T-cell (primary cell): ENCODE measurements at regions of chr3 and their contacts with region 1.

Region 1: DNA sequence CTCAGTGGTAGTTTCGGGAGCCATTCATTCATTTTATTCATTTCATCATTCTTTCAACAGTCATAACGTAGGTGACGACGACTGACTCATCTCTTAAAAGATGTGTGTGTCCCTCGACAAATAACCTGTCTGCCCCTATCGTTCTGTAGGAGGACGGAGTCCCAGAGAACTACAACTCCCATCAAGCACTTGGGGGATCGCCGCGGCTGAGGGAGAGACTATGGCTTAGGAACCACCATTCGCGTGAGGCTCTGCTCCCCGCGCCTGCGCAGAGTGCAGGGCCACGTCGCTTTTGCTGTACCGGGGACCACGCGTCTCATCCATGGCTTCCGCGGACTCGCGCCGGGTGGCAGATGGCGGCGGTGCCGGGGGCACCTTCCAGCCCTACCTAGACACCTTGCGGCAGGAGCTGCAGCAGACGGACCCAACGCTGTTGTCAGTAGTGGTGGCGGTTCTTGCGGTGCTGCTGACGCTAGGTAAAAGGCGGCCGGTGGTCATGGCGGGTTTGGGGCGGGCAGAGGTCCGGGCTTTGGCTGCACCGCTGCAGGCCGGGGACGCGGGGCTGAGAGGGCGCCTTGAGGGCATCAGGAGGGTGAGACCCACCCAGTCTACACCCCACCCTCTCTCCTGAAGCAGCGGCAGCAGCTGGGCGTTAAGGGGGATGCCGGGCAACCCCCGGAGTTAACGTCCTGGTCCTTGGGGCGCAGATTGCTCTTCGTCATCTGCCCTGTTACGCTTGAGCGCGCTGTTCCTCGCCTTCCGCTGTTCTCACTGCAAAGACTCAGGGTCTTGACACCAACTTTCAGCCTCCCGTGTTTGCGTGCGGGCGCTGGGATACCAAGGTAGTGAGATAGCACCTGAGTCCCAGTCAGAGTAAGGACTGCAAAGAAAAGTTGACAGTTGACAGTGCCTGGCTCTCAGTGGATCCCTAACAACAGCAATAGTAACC is at the start of gene SRPRB:
- DNase-seq: peak; percentile 84 to 97 (median 95)
- ATAC-seq: peak; percentile 97 to 99 (median 98)
- H3K4me3 ChIP-seq: peak within 1 kb of the TSS; percentile 70 to 94
- H3K4me3 Mint-ChIP-seq: peak within 1 kb of the TSS; percentile 95 to 99 (median 97)
- H3K27ac ChIP-seq: peak within 1 kb of the TSS; percentile 74
- H3K27ac Mint-ChIP-seq: peak within 1 kb of the TSS; percentile 86 to 93
- H3K4me1 ChIP-seq: peaks cover 3 to 14% of the 10 kb centered on the region in 2 experiments
- H3K4me1 Mint-ChIP-seq: peaks cover 22 to 43% (median 41%) of the 10 kb centered on the region in 3 donors
- H3K27me3 ChIP-seq: no peaks in the 10 kb centered on the region
- H3K27me3 Mint-ChIP-seq: no peaks in the 10 kb centered on the region
- total RNA-seq, gene SRPRB: 26.9 to 50.3 (median 45.6) TPM

Region 2: GRCh38 chr3:132879636-132880035 is 926.2 kb before region 1 on chr3:
- CTCF ChIA-PET with region 1: no interaction called
- POLR2A ChIA-PET with region 1: no interaction called
- DNase-seq: no peak
- ATAC-seq: no peak
- H3K4me3 ChIP-seq: no peak overlapping the region
- H3K4me3 Mint-ChIP-seq: no peak overlapping the region
- H3K27ac ChIP-seq: no peak overlapping the region
- H3K27ac Mint-ChIP-seq: no peak overlapping the region
- H3K4me1 ChIP-seq: no peaks in the 10 kb centered on the region
- H3K4me1 Mint-ChIP-seq: no peaks in the 10 kb centered on the region
- H3K27me3 ChIP-seq: peaks cover 0 to 2% of the 10 kb centered on the region in 2 experiments
- H3K27me3 Mint-ChIP-seq: peaks cover 7 to 22% of the 10 kb centered on the region in 2 donors

Region 3: DNA sequence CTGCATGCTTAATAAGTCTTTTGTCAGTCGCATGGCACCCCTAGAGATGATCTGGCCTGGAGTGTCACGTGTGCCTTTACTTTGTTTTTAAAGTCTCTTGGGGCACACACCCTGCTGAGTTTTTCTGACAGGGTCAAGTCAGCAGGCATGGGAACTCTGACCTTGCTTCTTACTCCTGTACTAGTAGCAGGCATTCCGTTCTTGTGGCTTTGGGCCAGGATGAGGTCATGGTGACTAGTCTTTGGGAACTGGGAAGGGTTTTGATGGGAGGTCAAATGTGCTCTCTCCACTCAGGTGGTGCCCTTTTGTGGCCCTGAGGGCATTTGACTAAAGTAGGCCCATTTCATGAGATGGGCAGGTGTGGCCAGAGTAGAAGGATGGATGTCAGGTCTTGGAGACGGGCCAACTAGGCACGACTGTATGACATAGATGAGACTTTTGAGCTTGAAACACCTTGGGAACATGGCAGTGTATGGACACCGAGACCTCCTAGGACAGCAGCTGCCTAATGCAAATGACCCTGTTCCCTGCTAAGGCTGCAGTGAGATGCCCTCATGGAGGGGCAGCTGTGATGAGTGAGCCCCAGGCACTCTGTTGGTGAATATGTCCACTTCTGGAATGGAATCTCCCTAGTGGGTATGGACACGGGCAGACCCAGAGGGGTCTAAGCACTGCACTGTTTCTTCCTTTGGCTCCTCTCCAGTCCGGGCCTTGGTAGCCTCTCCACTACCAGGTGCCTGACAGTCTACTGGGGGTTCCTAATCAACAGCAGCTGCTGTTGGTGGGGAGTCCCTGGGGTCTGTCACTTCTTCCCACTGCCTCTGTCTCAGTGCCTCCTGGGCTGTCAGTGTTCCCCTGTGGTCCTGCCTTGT is 16.2 kb after region 1 on chr3:
- CTCF ChIA-PET with region 1: interaction called, 3 to 11 read pairs
- POLR2A ChIA-PET with region 1: interaction called, 3 read pairs
- DNase-seq: no peak
- ATAC-seq: no peak
- H3K4me3 ChIP-seq: no peak overlapping the region
- H3K4me3 Mint-ChIP-seq: no peak overlapping the region
- H3K27ac ChIP-seq: no peak overlapping the region
- H3K27ac Mint-ChIP-seq: no peak overlapping the region
- H3K4me1 ChIP-seq: no peaks in the 10 kb centered on the region
- H3K4me1 Mint-ChIP-seq: peaks cover 0 to 2% (median 2%) of the 10 kb centered on the region in 3 donors
- H3K27me3 ChIP-seq: no peaks in the 10 kb centered on the region
- H3K27me3 Mint-ChIP-seq: no peaks in the 10 kb centered on the region